ENCODE measurements at regions of chr18 and their contacts with region 1.

Region 1: GRCh38 chr18:12934454-12935071 is 13.2 kb upstream of the SEH1L start:
- DNase-seq: peak; percentile 75 to 86
- H3K4me3 ChIP-seq: no peak overlapping the region
- H3K27ac ChIP-seq: no peak overlapping the region
- H3K4me1 ChIP-seq: peaks cover 11% of the 10 kb centered on the region
- H3K27me3 ChIP-seq: no peaks in the 10 kb centered on the region
- CTCF ChIP-seq: peak; percentile 94

Region 2: DNA sequence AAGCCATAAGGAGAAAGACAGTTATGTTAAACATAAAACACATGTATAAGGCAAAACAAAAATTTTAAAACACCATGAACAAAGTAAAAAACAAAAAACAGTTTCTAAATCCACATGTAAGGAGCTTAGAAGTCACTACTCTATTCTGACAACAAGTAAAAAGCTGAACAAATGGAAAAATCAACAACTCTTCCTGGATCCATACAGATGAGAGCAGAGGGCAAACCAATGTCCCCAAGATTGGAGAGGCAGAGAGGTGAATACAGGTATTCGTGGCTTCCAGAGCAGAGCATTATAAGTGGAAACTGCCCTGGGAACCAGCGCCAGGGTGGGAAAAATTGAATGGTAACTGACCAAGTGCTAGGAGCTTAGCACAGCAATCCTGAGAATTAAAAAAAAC is 370.2 kb before region 1 on chr18:
- CTCF ChIA-PET with region 1: no interaction called
- POLR2A ChIA-PET with region 1: no interaction called
- intact Hi-C with region 1: no loop called
- DNase-seq: no peak
- H3K4me3 ChIP-seq: no peak overlapping the region
- H3K27ac ChIP-seq: no peak overlapping the region
- H3K4me1 ChIP-seq: 0 out of 2 replicates have a peak, but pooled peaks cover 5% of the 10 kb centered on the region
- H3K27me3 ChIP-seq: no peaks in the 10 kb centered on the region
- CTCF ChIP-seq: no peak

Region 3: DNA sequence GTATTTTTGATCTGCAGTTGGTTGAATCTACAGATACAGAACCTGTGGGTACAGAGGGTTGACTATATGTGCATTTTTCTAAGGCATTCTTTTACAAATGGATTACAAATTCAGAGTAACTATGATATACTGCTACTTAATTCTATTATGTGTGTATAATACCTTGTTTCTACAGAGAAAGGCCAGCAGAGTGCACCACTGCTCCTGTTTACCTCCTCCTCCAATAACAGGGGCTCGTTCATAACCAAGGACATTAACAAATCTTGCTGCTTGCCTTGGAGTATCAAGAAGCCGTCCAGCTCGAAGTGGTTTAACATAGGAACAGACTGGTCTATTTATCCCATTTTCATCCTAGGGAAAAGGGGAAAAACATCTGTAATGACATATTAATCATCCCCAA is 248.5 kb before region 1 on chr18:
- CTCF ChIA-PET with region 1: no interaction called
- POLR2A ChIA-PET with region 1: no interaction called
- intact Hi-C with region 1: loop called (anchors 1 kb)
- DNase-seq: peak in 1 of 2 experiments; percentile 8
- H3K4me3 ChIP-seq: no peak overlapping the region
- H3K27ac ChIP-seq: no peak overlapping the region
- H3K4me1 ChIP-seq: no peaks in the 10 kb centered on the region
- H3K27me3 ChIP-seq: no peaks in the 10 kb centered on the region
- CTCF ChIP-seq: peak; percentile 48; the same call in 1 of the 2 replicates

Region 4: DNA sequence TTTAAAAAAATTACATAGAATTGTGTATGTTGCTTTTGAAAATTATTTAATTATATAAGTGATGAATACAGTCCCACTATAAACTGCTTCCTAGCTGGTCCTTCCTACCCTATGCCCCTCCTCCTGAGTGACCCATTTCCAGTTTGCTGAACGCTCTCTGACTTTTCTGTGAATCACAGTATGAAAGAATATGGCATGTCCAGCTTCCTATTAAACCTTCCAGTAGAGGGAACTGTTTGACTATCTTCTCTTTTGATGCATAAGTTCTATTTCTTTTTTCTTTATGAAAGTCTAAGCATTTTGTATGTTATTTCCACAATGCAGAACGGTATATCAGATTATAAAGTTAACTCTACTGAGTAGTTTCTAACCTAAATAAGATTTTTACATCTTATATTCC is 190.5 kb before region 1 on chr18:
- CTCF ChIA-PET with region 1: interaction called, 14 read pairs
- POLR2A ChIA-PET with region 1: no interaction called
- intact Hi-C with region 1: loop called (anchors 1 kb)
- DNase-seq: peak in 1 of 2 experiments; percentile 54
- H3K4me3 ChIP-seq: no peak overlapping the region
- H3K27ac ChIP-seq: no peak overlapping the region
- H3K4me1 ChIP-seq: peaks cover 34% of the 10 kb centered on the region
- H3K27me3 ChIP-seq: no peaks in the 10 kb centered on the region
- CTCF ChIP-seq: peak; percentile 68

Region 5: GRCh38 chr18:12862467-12862866 is 72.1 kb before region 1 on chr18:
- CTCF ChIA-PET with region 1: no interaction called
- POLR2A ChIA-PET with region 1: no interaction called
- intact Hi-C with region 1: no loop called
- DNase-seq: peak; percentile 87 to 88
- H3K4me3 ChIP-seq: no peak overlapping the region
- H3K27ac ChIP-seq: peak overlapping the region; percentile 85
- H3K4me1 ChIP-seq: peaks cover 32% of the 10 kb centered on the region
- H3K27me3 ChIP-seq: no peaks in the 10 kb centered on the region
- CTCF ChIP-seq: no peak

Region 6: DNA sequence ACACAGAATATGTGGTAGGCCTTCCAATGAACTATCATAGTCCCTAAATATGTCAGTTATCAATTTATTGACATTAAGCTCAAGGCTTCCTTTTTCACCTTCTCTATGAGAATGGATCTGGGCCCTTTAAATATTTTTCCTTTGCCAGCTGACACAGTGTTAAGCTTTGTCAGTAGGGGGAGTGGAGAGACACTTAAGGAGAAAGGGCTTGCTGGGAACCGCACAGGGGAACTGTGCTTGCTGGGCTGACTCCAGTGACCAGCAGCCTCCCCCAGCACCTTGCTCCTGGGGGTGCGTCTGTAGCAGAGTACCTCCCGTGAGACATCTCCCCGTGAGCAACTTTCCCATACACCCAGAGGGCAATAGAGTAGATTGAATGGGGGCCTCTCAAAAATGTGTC is 44.1 kb before region 1 on chr18:
- CTCF ChIA-PET with region 1: interaction called, 5 read pairs
- POLR2A ChIA-PET with region 1: interaction called, 3 read pairs
- intact Hi-C with region 1: loop called (anchors 5 kb)
- DNase-seq: peak; percentile 22 to 59
- H3K4me3 ChIP-seq: peak overlapping the region; percentile 6; the same call in 1 of the 2 replicates
- H3K27ac ChIP-seq: peak overlapping the region; percentile 95
- H3K4me1 ChIP-seq: peaks cover 41% of the 10 kb centered on the region
- H3K27me3 ChIP-seq: no peaks in the 10 kb centered on the region
- CTCF ChIP-seq: peak; percentile 45; the same call in 1 of the 2 replicates

Measured in PC-9 (cell line).